A673 (cell line): ENCODE measurements at regions of chr4 and their contacts with region 1.

Region 1: DNA sequence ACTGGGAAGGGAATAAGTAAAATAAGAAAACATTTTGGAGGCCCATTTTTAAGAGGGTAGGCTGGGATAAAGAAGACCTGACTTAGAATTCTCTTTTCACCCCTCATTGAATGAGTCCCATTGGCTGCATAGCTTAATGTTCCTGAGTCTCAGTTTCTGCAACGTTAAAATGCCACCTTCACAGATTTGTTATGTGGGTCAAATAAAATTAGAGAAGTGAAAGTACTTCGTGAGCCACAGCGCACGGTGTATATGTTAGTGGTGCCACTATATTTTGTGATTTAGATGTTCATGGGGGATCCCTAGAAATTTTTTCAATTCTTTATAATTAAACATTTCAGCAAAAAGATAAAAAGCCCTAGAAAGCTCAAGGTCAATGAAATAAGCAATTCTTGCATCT is 109.2 kb upstream of the HS3ST1 start:
- DNase-seq: no peak
- H3K4me3 ChIP-seq: no peak overlapping the region
- H3K27ac ChIP-seq: no peak overlapping the region
- H3K4me1 ChIP-seq: no peaks in the 10 kb centered on the region
- H3K27me3 ChIP-seq: no peaks in the 10 kb centered on the region
- CTCF ChIP-seq: no peak

Region 2: GRCh38 chr4:10629394-10629793 is 908.5 kb before region 1 on chr4:
- CTCF ChIA-PET with region 1: no interaction called
- POLR2A ChIA-PET with region 1: no interaction called
- intact Hi-C with region 1: no loop called
- DNase-seq: no peak
- H3K4me3 ChIP-seq: no peak overlapping the region
- H3K27ac ChIP-seq: no peak overlapping the region
- H3K4me1 ChIP-seq: no peaks in the 10 kb centered on the region
- H3K27me3 ChIP-seq: no peaks in the 10 kb centered on the region
- CTCF ChIP-seq: no peak

Region 3: DNA sequence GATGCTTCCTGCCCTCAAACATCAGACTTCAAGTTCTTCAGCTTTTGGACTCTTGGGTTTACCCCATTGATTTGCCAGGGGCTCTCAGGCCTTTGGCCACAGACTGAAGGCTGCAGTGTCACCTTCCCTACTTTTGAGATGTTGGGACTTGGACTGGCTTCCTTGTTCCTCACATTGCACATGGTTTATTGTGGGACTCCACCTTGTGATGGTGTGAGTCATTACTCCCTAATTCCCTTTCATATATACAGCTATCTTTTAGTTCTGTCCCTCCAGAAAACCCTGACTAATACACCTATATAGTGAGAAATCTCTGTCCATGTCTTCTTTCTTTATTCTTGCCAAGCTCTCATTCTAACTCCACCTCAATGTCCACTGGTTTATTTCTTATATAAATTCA is 627.8 kb after region 1 on chr4:
- CTCF ChIA-PET with region 1: no interaction called
- POLR2A ChIA-PET with region 1: no interaction called
- intact Hi-C with region 1: loop called (anchors 5 kb)
- DNase-seq: no peak
- H3K4me3 ChIP-seq: no peak overlapping the region
- H3K27ac ChIP-seq: no peak overlapping the region
- H3K4me1 ChIP-seq: no peaks in the 10 kb centered on the region
- H3K27me3 ChIP-seq: no peaks in the 10 kb centered on the region
- CTCF ChIP-seq: no peak